ENCODE measurements at regions of chr11 and their contacts with region 1.

Region 1: GRCh38 chr11:61733120-61733978 is 19.1 kb upstream of the MYRF start:
- DNase-seq: peak; percentile 88 to 89
- H3K4me3 ChIP-seq: no peak overlapping the region
- H3K27ac ChIP-seq: no peak overlapping the region
- H3K4me1 ChIP-seq: peaks cover 0 to 6% of the 10 kb centered on the region in 2 donors
- H3K27me3 ChIP-seq: no peaks in the 10 kb centered on the region
- CTCF ChIP-seq: peak; percentile 91 to 100 (median 99)
- POLR2A ChIP-seq: no peak

Region 2: GRCh38 chr11:61482513-61482912 is 250.8 kb before region 1 on chr11:
- intact Hi-C with region 1: no loop called
- DNase-seq: no peak
- H3K4me3 ChIP-seq: no peak overlapping the region
- H3K27ac ChIP-seq: no peak overlapping the region
- H3K4me1 ChIP-seq: peaks cover 0 to 9% of the 10 kb centered on the region in 2 donors
- H3K27me3 ChIP-seq: no peaks in the 10 kb centered on the region
- CTCF ChIP-seq: peak in 2 of 6 experiments; percentile 9 to 45
- POLR2A ChIP-seq: no peak

Region 3: GRCh38 chr11:61679893-61680621 is 53.3 kb before region 1 on chr11 and contains the start of gene DAGLA:
- intact Hi-C with region 1: loop called (anchors 2 kb)
- DNase-seq: peak; percentile 57 to 67
- H3K4me3 ChIP-seq: peak within 1 kb of the TSS in 2 of 3 donors; percentile 20 to 35
- H3K27ac ChIP-seq: peak within 1 kb of the TSS in 1 of 3 donors; percentile 26
- H3K4me1 ChIP-seq: peaks cover 4 to 20% of the 10 kb centered on the region in 2 donors
- H3K27me3 ChIP-seq: no peaks in the 10 kb centered on the region
- CTCF ChIP-seq: peak; percentile 36 to 99 (median 97)
- POLR2A ChIP-seq: no peak
- total RNA-seq, gene DAGLA: 1.7 to 2.8 (median 1.9) TPM

Measured in thyroid gland (tissue), 4 donors.